Mammary epithelial cell (primary cell): ENCODE measurements at regions of chr9 and their contacts with region 1.

Region 1: DNA sequence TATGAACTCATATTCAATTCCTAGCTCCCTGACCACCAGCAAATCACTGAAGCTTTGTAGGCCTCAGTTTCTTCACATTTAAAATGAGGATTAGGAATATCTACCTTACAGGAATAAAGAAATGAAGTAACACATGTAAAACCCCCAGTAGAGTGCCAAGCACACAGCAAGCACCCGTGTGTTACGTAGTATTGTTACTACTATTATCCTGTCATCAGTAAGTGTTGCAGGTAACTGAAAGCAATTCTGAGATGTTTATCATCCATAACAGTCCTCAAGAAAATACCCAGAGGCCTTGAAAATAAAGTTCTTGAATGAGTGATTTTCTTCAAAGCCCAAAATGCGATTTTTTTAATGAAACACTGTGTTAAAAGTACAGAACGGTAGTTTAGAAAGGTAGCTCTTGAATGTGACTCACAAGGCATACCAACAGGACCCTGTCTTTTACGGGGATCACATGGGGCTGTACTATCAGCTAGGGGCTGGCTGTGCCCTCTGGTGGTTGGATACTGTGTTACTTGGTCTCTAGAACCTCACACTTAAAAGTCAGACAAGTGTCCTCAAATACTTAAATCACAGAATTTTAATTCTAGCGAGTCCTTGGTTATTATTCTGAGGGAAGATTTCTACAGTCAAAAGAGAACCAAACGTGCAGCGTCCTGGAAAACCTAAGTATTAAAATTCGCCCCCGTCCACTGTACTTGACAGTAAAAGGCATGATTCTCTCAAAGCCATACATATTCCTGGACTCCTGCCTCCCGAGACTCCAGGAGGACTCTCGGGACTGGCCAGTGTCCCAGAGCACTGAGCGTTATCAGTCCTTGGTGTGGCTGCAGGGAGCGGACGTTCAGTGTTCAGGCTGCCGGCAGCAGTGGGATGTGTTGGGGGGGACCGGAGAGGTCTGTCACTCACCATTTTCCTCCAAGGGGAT is 725 bp downstream of the NDUFB6 start:
- DNase-seq: peak; percentile 76
- H3K4me3 ChIP-seq: peak overlapping the region; percentile 78 to 84 (median 84)
- H3K27ac ChIP-seq: peak overlapping the region; percentile 69
- H3K4me1 ChIP-seq: peaks cover 6% of the 10 kb centered on the region
- H3K27me3 ChIP-seq: no peaks in the 10 kb centered on the region
- CTCF ChIP-seq: peak; percentile 78 to 86

Region 2: DNA sequence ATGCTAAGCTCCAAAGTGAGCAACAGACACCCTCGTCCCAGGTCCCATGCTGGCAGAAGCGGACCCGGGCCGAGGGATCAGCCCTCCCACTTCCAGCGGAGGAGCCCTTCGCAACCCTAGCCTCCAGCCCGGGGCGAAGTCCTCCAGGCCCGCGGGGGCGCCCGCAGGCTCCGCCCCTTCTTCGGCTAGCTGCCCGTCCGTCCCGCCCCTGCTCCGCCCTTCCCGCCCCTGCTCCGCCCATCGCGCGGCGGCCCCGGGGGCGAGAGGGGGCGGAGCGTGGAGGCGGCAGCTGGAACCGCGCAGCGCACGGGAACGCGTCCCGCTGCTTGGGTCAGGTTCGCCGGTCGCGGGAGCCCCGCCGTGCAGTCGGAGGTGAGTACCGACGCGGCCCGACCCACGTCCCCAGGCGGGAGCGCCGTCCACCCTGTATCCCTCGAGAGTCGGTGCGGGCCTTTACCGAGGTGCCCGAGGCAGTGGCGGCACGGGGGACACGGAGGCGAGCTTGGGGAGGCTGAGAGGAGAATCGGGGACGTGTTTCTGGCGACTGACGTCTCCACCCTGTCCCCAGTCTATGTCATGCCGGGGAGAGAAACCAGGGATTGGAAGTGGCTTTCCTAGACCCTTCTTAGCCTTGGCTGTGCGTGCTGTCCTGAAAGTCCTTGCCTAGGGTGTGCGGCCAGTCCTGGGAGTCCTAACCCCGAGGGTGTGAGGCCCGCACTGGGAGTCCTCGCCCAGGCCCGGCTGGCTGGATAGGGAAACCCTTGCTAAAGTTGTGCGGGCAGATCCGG is 187.7 kb before region 1 on chr9 and contains the start of gene ACO1:
- CTCF ChIA-PET with region 1: interaction called, 36 read pairs
- dilution Hi-C with region 1: no loop called
- in situ Hi-C with region 1: loop called (anchors 5 kb)
- intact Hi-C with region 1: loop called (anchors 1 kb)
- DNase-seq: peak; percentile 83
- H3K4me3 ChIP-seq: peak within 1 kb of the TSS; percentile 79 to 98 (median 86)
- H3K27ac ChIP-seq: peak within 1 kb of the TSS; percentile 69
- H3K4me1 ChIP-seq: peaks cover 14% of the 10 kb centered on the region
- H3K27me3 ChIP-seq: no peaks in the 10 kb centered on the region
- CTCF ChIP-seq: no peak
- total RNA-seq, gene ACO1: 43.1 to 44.2 TPM

Region 3: GRCh38 chr9:32526041-32526706 is 46.1 kb before region 1 on chr9 and contains the start of gene RIGI:
- CTCF ChIA-PET with region 1: no interaction called
- dilution Hi-C with region 1: no loop called
- in situ Hi-C with region 1: no loop called
- intact Hi-C with region 1: loop called (anchors 1 kb)
- DNase-seq: peak; percentile 92
- H3K4me3 ChIP-seq: peak within 1 kb of the TSS; percentile 71 to 94 (median 75)
- H3K27ac ChIP-seq: peak within 1 kb of the TSS; percentile 80
- H3K4me1 ChIP-seq: peaks cover 15% of the 10 kb centered on the region
- H3K27me3 ChIP-seq: no peaks in the 10 kb centered on the region
- CTCF ChIP-seq: peak; percentile 35 to 61
- total RNA-seq, gene RIGI: 4.7 to 8.6 TPM

Region 4: GRCh38 chr9:32550562-32551433 is 21.4 kb before region 1 on chr9:
- CTCF ChIA-PET with region 1: interaction called, 3 read pairs
- dilution Hi-C with region 1: no loop called
- in situ Hi-C with region 1: no loop called
- intact Hi-C with region 1: loop called (anchors 1 kb)
- DNase-seq: peak; percentile 77
- H3K4me3 ChIP-seq: peak overlapping the region; percentile 85 to 99 (median 91)
- H3K27ac ChIP-seq: peak overlapping the region; percentile 96
- H3K4me1 ChIP-seq: peaks cover 9% of the 10 kb centered on the region
- H3K27me3 ChIP-seq: no peaks in the 10 kb centered on the region
- CTCF ChIP-seq: peak in 1 of 2 donors; percentile 15